Uterus (tissue), 4 donors: ENCODE measurements at regions of chr1 and their contacts with region 1.

Region 1: DNA sequence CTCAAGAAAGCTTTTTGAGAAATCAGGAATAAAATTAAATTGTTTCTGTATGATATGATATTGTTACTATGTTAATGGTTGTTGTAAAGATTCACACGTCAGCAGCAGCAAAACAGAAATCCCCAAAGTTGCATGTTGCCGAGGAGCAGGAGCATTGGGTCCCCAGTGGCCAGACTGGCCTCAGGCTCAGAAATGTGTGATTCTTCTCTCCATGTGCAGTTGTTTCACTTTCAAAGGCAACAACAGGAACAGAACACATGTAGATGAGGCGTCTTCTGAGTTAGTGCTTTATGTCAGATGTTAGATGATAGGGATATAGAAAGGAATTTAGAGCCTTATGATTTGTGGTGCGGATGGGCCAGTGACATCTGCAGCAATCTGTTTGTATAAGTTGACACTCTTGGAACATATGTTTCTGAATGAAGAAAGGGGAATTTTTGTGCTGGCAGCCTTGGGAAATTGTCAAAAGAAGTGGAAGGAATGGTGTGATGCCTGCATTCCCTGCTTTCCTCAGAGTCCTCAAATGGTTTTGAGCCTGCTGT is 2.1 kb upstream of the TTLL7 start:
- DNase-seq: no peak
- H3K4me3 ChIP-seq: no peak overlapping the region
- H3K27ac ChIP-seq: no peak overlapping the region
- H3K4me1 ChIP-seq: no peaks in the 10 kb centered on the region
- H3K27me3 ChIP-seq: no peaks in the 10 kb centered on the region
- CTCF ChIP-seq: no peak
- POLR2A ChIP-seq: no peak

Region 2: DNA sequence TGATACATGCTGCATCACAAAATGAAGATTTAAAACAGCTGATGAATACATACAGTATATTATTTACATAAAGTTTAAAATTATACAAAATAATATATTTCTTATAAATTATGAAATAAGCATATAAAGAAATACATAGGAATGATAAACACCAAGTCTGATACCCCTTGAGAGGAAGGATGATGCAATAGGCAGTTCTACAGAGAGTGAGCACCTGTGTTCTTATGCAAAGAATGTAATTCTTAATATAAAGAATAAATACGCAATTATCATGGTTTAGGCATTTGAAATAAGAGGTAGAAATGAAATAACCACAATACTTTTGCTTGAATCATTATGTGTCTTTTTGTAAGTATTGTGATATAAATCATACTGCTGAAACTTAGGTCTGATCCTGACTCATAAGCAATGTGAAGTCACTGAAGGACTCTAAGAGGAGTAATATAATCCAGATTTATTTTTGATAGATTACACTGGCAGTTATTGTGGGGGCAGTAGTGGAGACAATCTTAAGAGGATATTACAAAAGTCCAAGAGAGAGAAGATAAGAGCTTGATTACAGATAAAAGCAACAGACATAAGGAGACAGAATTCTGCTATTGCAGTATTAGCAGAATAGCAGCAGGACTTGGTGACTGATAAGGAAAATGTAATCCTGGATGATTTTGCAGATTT is 41.1 kb before region 1 on chr1:
- intact Hi-C with region 1: no loop called
- DNase-seq: no peak
- H3K4me3 ChIP-seq: no peak overlapping the region
- H3K27ac ChIP-seq: no peak overlapping the region
- H3K4me1 ChIP-seq: no peaks in the 10 kb centered on the region
- H3K27me3 ChIP-seq: no peaks in the 10 kb centered on the region
- CTCF ChIP-seq: no peak
- POLR2A ChIP-seq: no peak

Region 3: DNA sequence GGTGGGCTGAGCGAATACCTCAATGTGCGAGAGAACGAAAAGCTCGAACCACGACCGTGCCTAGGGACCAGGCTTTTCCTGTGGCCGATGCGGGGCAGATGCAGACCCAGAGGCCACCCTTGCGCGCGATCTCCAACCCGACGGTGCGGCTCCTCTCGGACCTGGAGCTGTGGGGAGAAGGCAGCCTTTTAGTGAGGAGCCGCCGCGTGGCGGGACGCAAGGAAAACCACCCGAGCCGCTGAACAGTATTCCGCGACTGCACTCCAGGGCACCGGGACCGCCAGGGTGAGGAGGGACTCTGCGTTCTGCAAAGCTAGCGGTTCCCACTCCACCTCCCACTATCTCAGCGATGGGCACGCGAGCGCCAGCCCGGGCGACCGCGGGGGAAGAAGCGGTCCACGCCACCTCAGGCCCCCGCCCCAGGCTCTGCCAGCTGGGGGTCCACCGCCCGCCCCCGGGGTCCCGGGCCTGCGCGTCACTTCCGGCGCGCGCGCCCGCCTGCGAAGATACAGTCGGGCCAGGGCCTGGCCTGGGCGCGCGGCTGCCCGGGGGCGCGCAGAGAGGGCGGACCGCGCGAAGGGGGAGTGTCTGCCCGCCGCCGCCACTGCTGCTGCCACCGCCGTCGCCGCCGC is 76.6 kb after region 1 on chr1:
- intact Hi-C with region 1: loop called (anchors 10 kb)
- DNase-seq: peak; percentile 53 to 76
- H3K4me3 ChIP-seq: peak overlapping the region; percentile 82 to 83
- H3K27ac ChIP-seq: peak overlapping the region; percentile 92 to 93
- H3K4me1 ChIP-seq: no peaks in the 10 kb centered on the region
- H3K27me3 ChIP-seq: no peaks in the 10 kb centered on the region
- CTCF ChIP-seq: peak in 1 of 4 experiments; percentile 17
- POLR2A ChIP-seq: peak in 1 of 2 donors; percentile 55